ENCODE measurements at regions of chr15 and their contacts with region 1.

Region 1: DNA sequence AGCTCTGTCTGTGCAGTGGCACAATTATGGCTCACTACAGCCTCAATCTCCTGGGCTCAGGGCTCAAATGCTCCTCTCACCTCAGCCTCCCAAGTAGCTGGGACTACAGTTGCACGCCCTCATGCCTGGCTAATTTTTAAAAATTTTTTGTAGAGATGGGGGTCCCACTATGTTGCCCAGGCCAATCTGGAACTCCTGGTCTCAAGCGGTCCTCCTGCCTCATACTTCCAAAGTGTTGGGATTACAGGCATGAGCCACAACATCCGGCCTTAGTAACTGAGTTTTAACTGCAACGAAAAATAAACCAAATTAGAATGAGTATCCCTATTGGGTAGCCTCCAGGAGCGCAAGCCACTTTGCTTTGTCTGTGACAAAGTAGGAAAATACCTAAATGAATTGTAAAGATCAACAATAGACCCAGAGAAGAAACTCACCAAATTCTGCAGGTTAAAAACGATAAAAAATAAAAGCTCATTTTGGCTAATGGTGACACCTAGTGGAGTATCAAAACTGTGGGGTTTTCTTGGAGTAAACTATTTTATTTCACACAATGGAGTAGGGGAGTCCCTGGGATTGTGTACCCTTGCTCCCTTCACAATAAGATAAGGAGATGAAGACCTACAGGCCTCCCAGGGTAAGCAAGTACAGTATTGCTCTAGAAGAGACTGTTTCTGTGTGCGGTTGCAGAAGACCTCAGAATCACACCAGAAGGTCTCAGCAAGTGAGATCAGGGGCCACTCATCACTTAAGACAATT is 21.0 kb upstream of the CA12 start:
- DNase-seq: peak in 2 of 9 experiments; percentile 46 to 63
- ATAC-seq: peak; percentile 65
- H3K4me3 ChIP-seq: no peak overlapping the region
- H3K4me3 Mint-ChIP-seq: no peak overlapping the region
- H3K27ac ChIP-seq: no peak overlapping the region
- H3K27ac Mint-ChIP-seq: no peak overlapping the region
- H3K4me1 ChIP-seq: no peaks in the 10 kb centered on the region
- H3K4me1 Mint-ChIP-seq: peaks cover 5% of the 10 kb centered on the region
- H3K27me3 ChIP-seq: no peaks in the 10 kb centered on the region
- H3K27me3 Mint-ChIP-seq: peaks cover 11% of the 10 kb centered on the region
- CTCF ChIP-seq: peak; percentile 72

Region 2: DNA sequence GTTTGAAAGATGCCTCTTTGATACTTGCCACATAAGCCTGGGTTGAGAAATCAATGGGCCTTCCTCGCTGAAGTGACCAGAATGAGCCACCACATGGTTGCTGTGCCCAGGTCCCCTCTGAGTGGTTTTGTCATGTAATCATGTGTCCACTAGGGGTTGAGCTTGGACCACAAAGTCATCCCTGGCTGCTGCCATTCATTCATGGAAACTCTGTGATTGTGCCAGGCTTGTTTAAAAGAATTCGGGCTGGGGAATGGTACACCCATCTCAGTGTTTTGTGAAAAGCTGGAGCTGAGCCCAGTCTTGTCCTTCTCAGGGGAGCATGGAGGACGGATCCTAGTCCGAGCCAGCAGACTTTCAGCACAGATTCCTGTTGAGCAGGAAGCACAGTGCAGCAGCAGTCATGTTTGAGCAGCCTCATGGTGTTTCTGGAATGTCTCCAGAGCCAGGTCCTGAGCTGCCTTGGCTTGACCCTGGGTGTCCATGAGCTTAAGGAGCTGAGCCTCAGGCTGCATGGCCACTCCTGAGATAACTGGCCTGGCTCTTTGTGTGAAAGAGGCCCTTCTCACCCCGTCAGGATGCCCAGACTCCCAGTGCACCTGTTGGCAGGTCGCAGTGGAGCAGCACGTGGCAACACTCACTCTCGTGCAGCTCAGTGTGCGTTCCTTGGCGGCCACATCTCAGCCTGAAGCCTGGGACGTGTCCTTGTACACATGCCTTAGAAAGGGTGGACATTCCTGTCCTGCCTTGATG is 620.5 kb before region 1 on chr15:
- CTCF ChIA-PET with region 1: no interaction called
- POLR2A ChIA-PET with region 1: no interaction called
- intact Hi-C with region 1: loop called in 1 of 2 experiments (anchors 5 kb)
- DNase-seq: peak in 2 of 9 experiments; percentile 22 to 28
- ATAC-seq: no peak
- H3K4me3 ChIP-seq: no peak overlapping the region
- H3K4me3 Mint-ChIP-seq: no peak overlapping the region
- H3K27ac ChIP-seq: no peak overlapping the region
- H3K27ac Mint-ChIP-seq: no peak overlapping the region
- H3K4me1 ChIP-seq: no peaks in the 10 kb centered on the region
- H3K4me1 Mint-ChIP-seq: no peaks in the 10 kb centered on the region
- H3K27me3 ChIP-seq: no peaks in the 10 kb centered on the region
- H3K27me3 Mint-ChIP-seq: peaks cover 6% of the 10 kb centered on the region
- CTCF ChIP-seq: no peak

Region 3: DNA sequence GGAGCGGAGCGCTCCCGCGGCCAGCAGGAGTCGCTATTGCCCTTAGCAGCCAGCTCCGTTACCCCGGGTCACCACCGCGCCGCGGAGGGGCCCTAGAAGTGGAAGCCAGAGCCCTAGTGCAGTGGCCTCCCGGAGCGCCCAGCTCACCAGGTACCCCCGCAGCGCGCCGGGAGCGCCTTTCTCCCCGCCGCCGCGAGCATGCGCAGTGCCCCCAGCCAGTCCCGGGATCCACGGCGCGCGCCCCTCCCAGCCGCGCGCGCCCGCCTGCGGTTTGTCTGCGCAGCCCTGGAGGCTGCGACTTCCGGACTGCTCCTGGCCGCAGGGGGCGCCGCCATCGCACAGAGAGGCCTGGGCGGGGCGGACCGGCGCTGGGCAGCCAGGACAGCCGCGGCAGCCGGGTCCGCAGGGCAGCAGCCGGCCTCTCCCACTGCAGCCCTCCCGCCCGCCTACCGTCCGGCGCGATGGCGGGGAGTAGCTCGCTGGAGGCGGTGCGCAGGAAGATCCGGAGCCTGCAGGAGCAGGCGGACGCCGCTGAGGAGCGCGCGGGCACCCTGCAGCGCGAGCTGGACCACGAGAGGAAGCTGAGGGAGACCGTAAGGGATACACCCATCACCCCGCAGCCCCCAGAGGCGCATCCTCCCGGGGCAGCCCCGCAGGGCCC is 354.4 kb before region 1 on chr15:
- CTCF ChIA-PET with region 1: interaction called, 28 read pairs
- POLR2A ChIA-PET with region 1: no interaction called
- intact Hi-C with region 1: loop called (anchors 1 kb)
- DNase-seq: peak; percentile 65 to 92 (median 85)
- ATAC-seq: peak; percentile 77
- H3K4me3 ChIP-seq: peak overlapping the region; percentile 62 to 72
- H3K4me3 Mint-ChIP-seq: peak overlapping the region; percentile 88
- H3K27ac ChIP-seq: peak overlapping the region in 1 of 2 experiments; percentile 47
- H3K27ac Mint-ChIP-seq: peak overlapping the region; percentile 74
- H3K4me1 ChIP-seq: peaks cover 21% of the 10 kb centered on the region
- H3K4me1 Mint-ChIP-seq: peaks cover 21% of the 10 kb centered on the region
- H3K27me3 ChIP-seq: peaks cover 14 to 25% of the 10 kb centered on the region in 2 experiments
- H3K27me3 Mint-ChIP-seq: peaks cover 32% of the 10 kb centered on the region
- CTCF ChIP-seq: peak; percentile 80

Region 4: GRCh38 chr15:63166219-63166618 is 236.5 kb before region 1 on chr15:
- CTCF ChIA-PET with region 1: no interaction called
- POLR2A ChIA-PET with region 1: no interaction called
- intact Hi-C with region 1: loop called (anchors 5 kb)
- DNase-seq: peak in 2 of 9 experiments; percentile 34 to 51
- ATAC-seq: no peak
- H3K4me3 ChIP-seq: no peak overlapping the region
- H3K4me3 Mint-ChIP-seq: no peak overlapping the region
- H3K27ac ChIP-seq: no peak overlapping the region
- H3K27ac Mint-ChIP-seq: no peak overlapping the region
- H3K4me1 ChIP-seq: no peaks in the 10 kb centered on the region
- H3K4me1 Mint-ChIP-seq: peaks cover 4% of the 10 kb centered on the region
- H3K27me3 ChIP-seq: no peaks in the 10 kb centered on the region
- H3K27me3 Mint-ChIP-seq: no peaks in the 10 kb centered on the region
- CTCF ChIP-seq: no peak

Region 5: DNA sequence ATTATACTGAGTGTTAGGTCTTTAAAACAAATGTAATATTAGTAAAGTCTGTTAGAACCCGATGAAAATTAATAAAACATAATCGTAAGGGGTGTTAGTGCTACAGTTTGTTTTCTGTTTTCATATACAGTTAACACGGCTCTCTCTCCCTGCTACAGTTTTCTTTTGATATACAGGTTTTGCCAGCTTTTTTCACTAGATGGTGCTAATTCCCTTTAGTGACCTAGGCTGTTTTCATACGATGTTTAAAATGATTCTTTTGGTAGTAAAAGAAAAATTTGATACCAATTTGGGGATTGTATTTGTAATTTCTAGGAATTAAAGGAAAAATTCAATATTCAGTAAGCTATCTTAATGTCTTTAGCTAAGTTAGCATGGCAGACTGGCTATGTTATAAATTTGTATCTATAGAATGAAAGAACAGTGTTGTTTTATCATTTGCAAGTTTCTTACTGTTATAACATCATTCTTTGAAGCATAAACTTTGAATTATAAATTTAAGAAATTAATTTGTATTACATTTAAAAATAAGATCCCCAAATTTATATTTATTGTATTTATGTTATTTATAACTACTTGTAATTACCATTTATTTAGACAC is 113.8 kb before region 1 on chr15:
- CTCF ChIA-PET with region 1: interaction called, 16 read pairs
- POLR2A ChIA-PET with region 1: interaction called, 3 read pairs
- intact Hi-C with region 1: loop called (anchors 1 kb)
- DNase-seq: peak in 2 of 9 experiments; percentile 57 to 72
- ATAC-seq: peak; percentile 75
- H3K4me3 ChIP-seq: no peak overlapping the region
- H3K4me3 Mint-ChIP-seq: no peak overlapping the region
- H3K27ac ChIP-seq: peak overlapping the region in 1 of 2 experiments; percentile 0
- H3K27ac Mint-ChIP-seq: no peak overlapping the region
- H3K4me1 ChIP-seq: peaks cover 7% of the 10 kb centered on the region
- H3K4me1 Mint-ChIP-seq: peaks cover 7% of the 10 kb centered on the region
- H3K27me3 ChIP-seq: no peaks in the 10 kb centered on the region
- H3K27me3 Mint-ChIP-seq: no peaks in the 10 kb centered on the region
- CTCF ChIP-seq: peak; percentile 81

Region 6: GRCh38 chr15:64324165-64324877 is 921.6 kb after region 1 on chr15:
- CTCF ChIA-PET with region 1: no interaction called
- POLR2A ChIA-PET with region 1: no interaction called
- intact Hi-C with region 1: no loop called
- DNase-seq: no peak
- ATAC-seq: no peak
- H3K4me3 ChIP-seq: no peak overlapping the region
- H3K4me3 Mint-ChIP-seq: no peak overlapping the region
- H3K27ac ChIP-seq: no peak overlapping the region
- H3K27ac Mint-ChIP-seq: no peak overlapping the region
- H3K4me1 ChIP-seq: no peaks in the 10 kb centered on the region
- H3K4me1 Mint-ChIP-seq: peaks cover 10% of the 10 kb centered on the region
- H3K27me3 ChIP-seq: no peaks in the 10 kb centered on the region
- H3K27me3 Mint-ChIP-seq: no peaks in the 10 kb centered on the region
- CTCF ChIP-seq: no peak